GM23248 (cell line): ENCODE measurements at regions of chr1 and their contacts with region 1.

Region 1: DNA sequence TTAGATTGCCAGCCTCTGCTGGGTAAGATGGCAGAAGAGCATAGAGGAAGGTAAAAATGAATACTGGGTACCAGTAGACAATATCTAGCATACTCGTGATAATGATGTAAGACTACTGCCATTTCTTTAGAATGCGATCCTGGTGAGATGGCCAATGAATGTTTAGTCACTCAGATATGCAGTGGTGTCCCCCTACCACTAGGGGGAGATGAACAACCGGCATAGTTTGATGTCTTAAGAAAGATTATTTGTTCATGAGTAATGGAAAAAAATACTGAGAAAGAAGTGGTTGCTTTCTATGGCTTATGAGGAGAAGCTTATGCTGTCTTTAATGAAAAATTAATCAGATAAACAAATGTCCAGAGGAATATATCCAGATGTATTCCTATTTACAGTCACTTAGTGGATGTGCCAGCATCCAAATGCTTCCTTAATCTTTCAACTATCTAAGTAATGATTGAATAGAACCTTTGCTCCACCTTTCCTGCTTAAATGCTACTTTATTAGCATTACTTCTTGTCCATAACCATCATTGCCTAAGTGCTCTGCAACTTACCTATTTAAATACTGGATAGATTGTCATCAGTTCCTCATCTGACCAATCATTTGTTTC is 256.6 kb downstream of the ST6GALNAC3 start:
- DNase-seq: peak; percentile 79
- H3K4me3 ChIP-seq: no peak overlapping the region
- H3K27ac ChIP-seq: no peak overlapping the region
- H3K4me1 ChIP-seq: no peaks in the 10 kb centered on the region
- H3K27me3 ChIP-seq: no peaks in the 10 kb centered on the region

Region 2: GRCh38 chr1:75901371-75901770 is 429.7 kb before region 1 on chr1:
- in situ Hi-C with region 1: no loop called
- DNase-seq: no peak
- H3K4me3 ChIP-seq: no peak overlapping the region
- H3K27ac ChIP-seq: no peak overlapping the region
- H3K4me1 ChIP-seq: no peaks in the 10 kb centered on the region
- H3K27me3 ChIP-seq: no peaks in the 10 kb centered on the region

Region 3: DNA sequence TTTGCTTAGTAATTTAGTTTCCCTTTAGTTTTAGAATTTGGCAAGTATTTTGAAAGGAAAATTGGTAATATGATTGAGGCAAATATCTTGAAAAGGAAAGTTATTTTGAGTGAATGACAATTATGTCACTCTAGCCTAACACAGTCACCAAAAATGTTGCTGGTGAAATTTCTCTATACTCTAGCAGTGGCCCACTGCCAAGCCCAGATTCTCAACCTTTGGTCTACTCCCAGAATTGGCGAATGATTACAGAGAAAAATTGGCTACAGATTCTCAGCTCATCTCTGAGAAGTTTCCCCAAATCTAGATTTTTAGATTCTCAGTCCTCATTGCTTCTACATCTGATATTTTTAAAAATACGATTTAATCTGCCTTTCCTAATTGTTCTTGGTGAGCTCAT is 803.3 kb after region 1 on chr1:
- in situ Hi-C with region 1: loop called (anchors 10 kb)
- DNase-seq: peak; percentile 28
- H3K4me3 ChIP-seq: no peak overlapping the region
- H3K27ac ChIP-seq: no peak overlapping the region
- H3K4me1 ChIP-seq: peaks cover 4% of the 10 kb centered on the region; the same call in 1 of the 2 replicates
- H3K27me3 ChIP-seq: no peaks in the 10 kb centered on the region